ENCODE measurements at regions of chr12 and their contacts with region 1.

Region 1: GRCh38 chr12:11136075-11136474 is 1.6 kb upstream of the TAS2R30 start:
- DNase-seq: no peak
- ATAC-seq: no peak
- H3K4me3 ChIP-seq: no peak overlapping the region
- H3K4me3 Mint-ChIP-seq: no peak overlapping the region
- H3K27ac ChIP-seq: no peak overlapping the region
- H3K27ac Mint-ChIP-seq: no peak overlapping the region
- H3K4me1 ChIP-seq: no peaks in the 10 kb centered on the region
- H3K4me1 Mint-ChIP-seq: peaks cover 48% of the 10 kb centered on the region
- H3K27me3 ChIP-seq: no peaks in the 10 kb centered on the region
- H3K27me3 Mint-ChIP-seq: no peaks in the 10 kb centered on the region
- CTCF ChIP-seq: no peak

Region 2: DNA sequence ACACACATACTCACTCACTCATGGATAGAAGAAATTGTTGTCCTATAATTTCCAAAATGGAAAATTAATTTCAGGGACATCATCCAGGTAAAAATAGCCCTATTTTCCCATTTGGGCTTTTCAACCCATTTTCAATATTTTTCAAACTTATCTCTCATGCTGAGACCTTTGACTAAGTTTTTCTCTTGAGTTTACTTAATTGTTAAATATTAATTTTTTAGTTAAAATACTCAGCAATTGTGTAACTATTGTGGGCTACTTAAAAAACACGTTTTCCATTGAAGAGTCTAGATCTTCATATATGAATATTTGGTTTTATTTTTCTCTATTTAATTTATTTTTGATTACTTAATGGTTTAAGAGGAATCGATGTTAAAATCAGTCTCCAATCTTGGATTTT is 29.8 kb before region 1 on chr12:
- CTCF ChIA-PET with region 1: no interaction called
- POLR2A ChIA-PET with region 1: no interaction called
- intact Hi-C with region 1: no loop called
- DNase-seq: no peak
- ATAC-seq: no peak
- H3K4me3 ChIP-seq: no peak overlapping the region
- H3K4me3 Mint-ChIP-seq: no peak overlapping the region
- H3K27ac ChIP-seq: no peak overlapping the region
- H3K27ac Mint-ChIP-seq: no peak overlapping the region
- H3K4me1 ChIP-seq: peaks cover 7% of the 10 kb centered on the region
- H3K4me1 Mint-ChIP-seq: peaks cover 34% of the 10 kb centered on the region
- H3K27me3 ChIP-seq: no peaks in the 10 kb centered on the region
- H3K27me3 Mint-ChIP-seq: no peaks in the 10 kb centered on the region
- CTCF ChIP-seq: no peak

Region 3: GRCh38 chr12:11183011-11183410 is 46.9 kb after region 1 on chr12:
- CTCF ChIA-PET with region 1: no interaction called
- POLR2A ChIA-PET with region 1: no interaction called
- intact Hi-C with region 1: loop called in 1 of 2 experiments (anchors 5 kb)
- DNase-seq: no peak
- ATAC-seq: no peak
- H3K4me3 ChIP-seq: no peak overlapping the region
- H3K4me3 Mint-ChIP-seq: no peak overlapping the region
- H3K27ac ChIP-seq: no peak overlapping the region
- H3K27ac Mint-ChIP-seq: no peak overlapping the region
- H3K4me1 ChIP-seq: no peaks in the 10 kb centered on the region
- H3K4me1 Mint-ChIP-seq: no peaks in the 10 kb centered on the region
- H3K27me3 ChIP-seq: no peaks in the 10 kb centered on the region
- H3K27me3 Mint-ChIP-seq: no peaks in the 10 kb centered on the region
- CTCF ChIP-seq: no peak